ENCODE measurements at regions of chr6 and their contacts with region 1.

Region 1: DNA sequence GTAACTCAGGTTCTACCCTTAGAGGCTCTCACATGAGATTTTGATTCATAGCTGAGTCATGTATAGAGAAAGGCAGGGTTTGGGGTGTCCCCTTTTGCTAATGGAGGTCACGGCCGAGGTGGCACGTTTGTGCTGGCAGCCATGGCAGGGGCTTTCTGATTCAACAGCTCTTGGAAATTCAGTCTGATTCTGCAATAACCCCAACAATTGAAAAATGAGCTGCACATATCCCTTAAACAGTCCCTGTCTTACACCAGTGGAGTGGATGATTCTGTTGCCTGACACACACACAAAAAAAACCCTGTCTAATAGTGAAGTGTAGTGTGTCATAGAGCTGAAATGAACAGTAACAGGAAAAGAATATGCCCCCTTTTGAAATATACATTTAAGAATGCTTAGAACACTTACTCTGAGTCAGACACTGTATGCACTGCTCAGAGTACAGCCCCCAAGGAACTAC is 40.4 kb upstream of the ARG1 start:
- DNase-seq: no peak
- H3K4me3 Mint-ChIP-seq: no peak overlapping the region
- H3K27ac Mint-ChIP-seq: no peak overlapping the region
- H3K4me1 Mint-ChIP-seq: no peaks in the 10 kb centered on the region
- H3K27me3 Mint-ChIP-seq: peaks cover 38% of the 10 kb centered on the region
- CTCF ChIP-seq: no peak

Region 2: GRCh38 chr6:130872250-130873095 is 660.1 kb before region 1 on chr6:
- CTCF ChIA-PET with region 1: no interaction called
- intact Hi-C with region 1: loop called (anchors 1 kb)
- DNase-seq: peak; percentile 78
- H3K4me3 Mint-ChIP-seq: no peak overlapping the region
- H3K27ac Mint-ChIP-seq: no peak overlapping the region
- H3K4me1 Mint-ChIP-seq: no peaks in the 10 kb centered on the region
- H3K27me3 Mint-ChIP-seq: no peaks in the 10 kb centered on the region
- CTCF ChIP-seq: peak; percentile 89

Region 3: GRCh38 chr6:130885392-130886192 is 647.0 kb before region 1 on chr6:
- CTCF ChIA-PET with region 1: no interaction called
- intact Hi-C with region 1: loop called (anchors 1 kb)
- DNase-seq: peak; percentile 83
- H3K4me3 Mint-ChIP-seq: no peak overlapping the region
- H3K27ac Mint-ChIP-seq: no peak overlapping the region
- H3K4me1 Mint-ChIP-seq: peaks cover 9% of the 10 kb centered on the region
- H3K27me3 Mint-ChIP-seq: no peaks in the 10 kb centered on the region
- CTCF ChIP-seq: peak; percentile 79

Region 4: GRCh38 chr6:131116749-131117360 is 415.8 kb before region 1 on chr6:
- CTCF ChIA-PET with region 1: no interaction called
- intact Hi-C with region 1: loop called (anchors 2 kb)
- DNase-seq: peak; percentile 58
- H3K4me3 Mint-ChIP-seq: no peak overlapping the region
- H3K27ac Mint-ChIP-seq: no peak overlapping the region
- H3K4me1 Mint-ChIP-seq: peaks cover 27% of the 10 kb centered on the region
- H3K27me3 Mint-ChIP-seq: no peaks in the 10 kb centered on the region
- CTCF ChIP-seq: peak; percentile 40

Region 5: GRCh38 chr6:131182991-131183425 is 349.6 kb before region 1 on chr6:
- CTCF ChIA-PET with region 1: no interaction called
- intact Hi-C with region 1: loop called (anchors 1 kb)
- DNase-seq: peak; percentile 16
- H3K4me3 Mint-ChIP-seq: no peak overlapping the region
- H3K27ac Mint-ChIP-seq: no peak overlapping the region
- H3K4me1 Mint-ChIP-seq: peaks cover 8% of the 10 kb centered on the region
- H3K27me3 Mint-ChIP-seq: no peaks in the 10 kb centered on the region
- CTCF ChIP-seq: no peak

Region 6: DNA sequence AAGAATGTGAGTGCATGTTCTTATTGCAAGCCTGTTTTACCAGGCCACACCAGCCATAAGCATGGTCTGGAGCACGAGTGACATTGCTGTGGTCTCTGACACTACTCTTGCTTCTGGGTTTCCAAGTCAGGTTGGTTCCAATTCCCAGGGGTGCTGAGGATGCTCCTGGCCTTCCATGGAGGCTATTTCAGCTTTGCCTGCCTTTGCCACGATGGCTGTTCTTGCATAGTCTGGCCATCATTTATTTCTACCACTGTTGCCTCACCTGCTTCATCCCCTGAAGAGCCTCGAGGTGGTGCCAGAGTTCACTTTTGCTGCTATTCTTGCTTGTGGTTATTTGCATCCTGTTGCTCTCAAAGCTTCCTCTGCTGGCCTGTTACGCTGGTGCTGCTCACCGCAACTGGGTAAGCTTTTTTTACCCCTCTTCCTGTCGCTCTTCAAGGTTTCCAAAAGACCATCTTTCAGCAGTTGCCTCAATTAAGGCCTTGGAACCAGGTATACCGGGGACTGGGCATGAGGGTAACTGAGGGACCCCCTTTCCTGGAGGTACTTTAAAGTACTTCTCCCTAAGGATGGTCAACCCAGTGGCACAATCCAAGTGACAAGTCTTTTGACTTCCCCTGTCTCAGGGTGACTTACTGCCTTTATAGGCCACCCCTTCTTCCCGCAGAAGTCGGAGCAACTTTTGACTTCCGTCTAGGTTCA is 332.9 kb before region 1 on chr6:
- CTCF ChIA-PET with region 1: interaction called, 22 read pairs
- intact Hi-C with region 1: loop called (anchors 1 kb)
- DNase-seq: peak; percentile 63
- H3K4me3 Mint-ChIP-seq: no peak overlapping the region
- H3K27ac Mint-ChIP-seq: no peak overlapping the region
- H3K4me1 Mint-ChIP-seq: no peaks in the 10 kb centered on the region
- H3K27me3 Mint-ChIP-seq: no peaks in the 10 kb centered on the region
- CTCF ChIP-seq: peak; percentile 80

Region 7: GRCh38 chr6:131519670-131520436 is 12.8 kb before region 1 on chr6:
- CTCF ChIA-PET with region 1: interaction called, 15 read pairs
- intact Hi-C with region 1: no loop called
- DNase-seq: peak; percentile 59
- H3K4me3 Mint-ChIP-seq: no peak overlapping the region
- H3K27ac Mint-ChIP-seq: no peak overlapping the region
- H3K4me1 Mint-ChIP-seq: no peaks in the 10 kb centered on the region
- H3K27me3 Mint-ChIP-seq: no peaks in the 10 kb centered on the region
- CTCF ChIP-seq: peak; percentile 69

Region 8: GRCh38 chr6:131733376-131734016 is 200.9 kb after region 1 on chr6:
- CTCF ChIA-PET with region 1: no interaction called
- intact Hi-C with region 1: no loop called
- DNase-seq: no peak
- H3K4me3 Mint-ChIP-seq: no peak overlapping the region
- H3K27ac Mint-ChIP-seq: no peak overlapping the region
- H3K4me1 Mint-ChIP-seq: no peaks in the 10 kb centered on the region
- H3K27me3 Mint-ChIP-seq: peaks cover 26% of the 10 kb centered on the region
- CTCF ChIP-seq: no peak

Region 9: GRCh38 chr6:132122871-132123270 is 590.3 kb after region 1 on chr6:
- CTCF ChIA-PET with region 1: no interaction called
- intact Hi-C with region 1: no loop called
- DNase-seq: no peak
- H3K4me3 Mint-ChIP-seq: no peak overlapping the region
- H3K27ac Mint-ChIP-seq: no peak overlapping the region
- H3K4me1 Mint-ChIP-seq: peaks cover 8% of the 10 kb centered on the region
- H3K27me3 Mint-ChIP-seq: no peaks in the 10 kb centered on the region
- CTCF ChIP-seq: no peak

Measured in Calu3 (cell line).